ENCODE measurements at regions of chr12 and their contacts with region 1.

Region 1: DNA sequence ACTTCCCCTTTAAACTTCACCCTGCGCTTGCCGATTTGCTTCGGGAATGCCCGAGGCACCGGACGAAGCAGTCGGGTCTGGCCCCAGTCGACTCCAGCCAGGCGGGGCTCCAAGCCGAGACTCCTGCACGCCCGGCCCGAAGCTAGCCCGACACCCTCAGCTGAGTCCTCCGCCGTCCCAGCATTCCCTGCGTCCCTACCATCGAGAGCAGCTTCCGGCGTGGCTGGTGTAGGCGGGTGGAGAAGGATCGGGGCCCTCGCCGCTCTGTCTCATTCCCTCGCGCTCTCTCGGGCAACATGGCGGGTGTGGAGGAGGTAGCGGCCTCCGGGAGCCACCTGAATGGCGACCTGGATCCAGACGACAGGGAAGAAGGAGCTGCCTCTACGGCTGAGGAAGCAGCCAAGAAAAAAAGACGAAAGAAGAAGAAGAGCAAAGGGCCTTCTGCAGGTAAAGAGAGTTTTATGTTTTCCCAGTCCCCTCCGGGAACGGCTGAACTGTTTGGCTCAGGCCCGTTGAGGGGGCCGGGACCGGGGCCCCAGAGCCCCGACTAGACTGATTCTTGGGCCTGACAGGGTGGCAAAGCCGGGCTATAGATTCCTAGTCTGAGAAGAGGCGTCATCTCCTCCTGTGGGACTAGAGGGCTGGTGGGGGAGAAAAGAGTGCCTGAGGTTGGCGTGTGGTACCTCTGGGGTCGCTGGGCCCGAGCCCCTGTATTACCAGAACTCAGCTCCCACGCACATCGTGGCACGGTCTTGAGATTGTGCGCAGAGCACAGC is at the start of gene METAP2:
- DNase-seq: peak; percentile 89 to 96 (median 92)
- ATAC-seq: peak; percentile 99
- H3K4me3 ChIP-seq: peak within 1 kb of the TSS; percentile 86
- H3K27ac ChIP-seq: peak within 1 kb of the TSS; percentile 87
- H3K4me1 ChIP-seq: peaks cover 0 to 4% of the 10 kb centered on the region in 2 experiments; a peak in 2 of 5 replicates
- H3K27me3 ChIP-seq: no peaks in the 10 kb centered on the region
- CTCF ChIP-seq: no peak
- EP300 ChIP-seq: no peak; the same call in 1 of the 2 replicates
- POLR2A ChIP-seq: peak; percentile 98
- RAD21 ChIP-seq: peak in 1 of 2 experiments; percentile 20; a peak in 1 of 4 replicates
- polyA plus RNA-seq, gene METAP2: 75.5 to 104 TPM

Region 2: GRCh38 chr12:95460896-95461661 is 13.0 kb before region 1 on chr12:
- CTCF ChIA-PET with region 1: no interaction called
- POLR2A ChIA-PET with region 1: interaction called, 29 read pairs
- in situ Hi-C with region 1: no loop called
- intact Hi-C with region 1: no loop called
- DNase-seq: no peak
- ATAC-seq: peak; percentile 48; the same call in 2 of the 3 replicates
- H3K4me3 ChIP-seq: no peak overlapping the region
- H3K27ac ChIP-seq: no peak overlapping the region
- H3K4me1 ChIP-seq: peaks cover 0 to 7% of the 10 kb centered on the region in 2 experiments; a peak in 1 of 5 replicates
- H3K27me3 ChIP-seq: no peaks in the 10 kb centered on the region
- CTCF ChIP-seq: no peak
- EP300 ChIP-seq: no peak
- POLR2A ChIP-seq: no peak
- RAD21 ChIP-seq: no peak